IMR-90 (cell line): ENCODE measurements at regions of chr3 and their contacts with region 1.

Region 1: GRCh38 chr3:50278106-50278867 is 600 bp upstream of the LSMEM2 start:
- DNase-seq: no peak
- ATAC-seq: peak; percentile 5; the same call in 1 of the 2 replicates
- H3K4me3 ChIP-seq: no peak overlapping the region
- H3K27ac ChIP-seq: no peak overlapping the region
- H3K4me1 ChIP-seq: no peaks in the 10 kb centered on the region
- H3K27me3 ChIP-seq: no peaks in the 10 kb centered on the region
- CTCF ChIP-seq: no peak
- POLR2A ChIP-seq: no peak
- RAD21 ChIP-seq: no peak

Region 2: DNA sequence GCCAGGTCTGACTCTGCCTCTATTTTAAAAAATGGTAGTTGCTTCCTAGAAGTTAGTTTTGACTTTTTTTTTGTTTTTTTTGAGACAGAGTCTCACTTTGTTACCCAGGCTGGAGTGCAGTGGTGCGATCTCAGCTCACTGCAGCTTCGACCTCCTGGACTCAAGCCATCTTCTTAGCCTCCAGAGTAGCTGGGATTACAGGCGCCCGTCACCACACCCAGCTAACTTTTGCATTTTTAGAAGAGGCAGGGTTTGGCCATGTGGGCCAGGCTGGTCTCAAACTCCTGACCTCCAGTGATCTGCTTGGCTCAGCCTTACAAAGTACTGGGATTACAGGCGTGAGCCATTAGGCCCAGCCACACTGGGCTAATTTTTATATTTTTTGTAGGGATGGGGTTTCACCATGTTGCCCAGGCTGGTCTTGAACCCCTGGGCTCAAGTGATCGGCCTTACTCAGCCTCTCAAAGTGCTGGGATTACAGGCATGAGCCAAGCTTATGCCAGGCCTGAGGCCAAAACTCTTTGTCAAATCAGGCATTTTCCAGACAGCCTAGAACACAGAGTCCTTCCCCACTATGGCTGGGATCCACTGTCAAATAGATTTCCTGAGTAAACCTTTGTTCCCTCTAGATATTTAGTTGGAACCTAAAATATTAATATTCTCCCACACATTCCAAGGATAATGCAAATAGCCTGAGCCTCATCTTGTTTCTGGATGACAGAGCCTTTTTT is 1015.0 kb before region 1 on chr3:
- CTCF ChIA-PET with region 1: no interaction called
- POLR2A ChIA-PET with region 1: interaction called, 16 read pairs
- dilution Hi-C with region 1: no loop called
- in situ Hi-C with region 1: no loop called
- intact Hi-C with region 1: no loop called
- DNase-seq: no peak
- ATAC-seq: no peak
- H3K4me3 ChIP-seq: no peak overlapping the region
- H3K27ac ChIP-seq: no peak overlapping the region
- H3K4me1 ChIP-seq: no peaks in the 10 kb centered on the region; the same call in 1 of the 2 replicates
- H3K27me3 ChIP-seq: no peaks in the 10 kb centered on the region
- CTCF ChIP-seq: no peak
- POLR2A ChIP-seq: no peak
- RAD21 ChIP-seq: no peak